H1 (cell line): ENCODE measurements at regions of chr17 and their contacts with region 1.

Region 1: GRCh38 chr17:19362277-19363113 is at the start of gene B9D1:
- DNase-seq: peak; percentile 73 to 97
- H3K4me3 ChIP-seq: peak within 1 kb of the TSS; percentile 34 to 93 (median 75)
- H3K27ac ChIP-seq: no peak within 1 kb of the TSS; the same call in 1 of the 2 replicates
- H3K4me1 ChIP-seq: peaks cover 0 to 9% (median 3%) of the 10 kb centered on the region in 4 experiments; a peak in 4 of 7 replicates
- H3K27me3 ChIP-seq: no peaks in the 10 kb centered on the region; a peak in 1 of 7 replicates
- CTCF ChIP-seq: peak; percentile 91 to 99 (median 95)
- EP300 ChIP-seq: peak in 1 of 2 experiments; percentile 27; a peak in 1 of 3 replicates
- POLR2A ChIP-seq: no peak
- RAD21 ChIP-seq: peak; percentile 99
- total RNA-seq, gene B9D1: 24.6 and 25.4 TPM in 2 replicates

Region 2: DNA sequence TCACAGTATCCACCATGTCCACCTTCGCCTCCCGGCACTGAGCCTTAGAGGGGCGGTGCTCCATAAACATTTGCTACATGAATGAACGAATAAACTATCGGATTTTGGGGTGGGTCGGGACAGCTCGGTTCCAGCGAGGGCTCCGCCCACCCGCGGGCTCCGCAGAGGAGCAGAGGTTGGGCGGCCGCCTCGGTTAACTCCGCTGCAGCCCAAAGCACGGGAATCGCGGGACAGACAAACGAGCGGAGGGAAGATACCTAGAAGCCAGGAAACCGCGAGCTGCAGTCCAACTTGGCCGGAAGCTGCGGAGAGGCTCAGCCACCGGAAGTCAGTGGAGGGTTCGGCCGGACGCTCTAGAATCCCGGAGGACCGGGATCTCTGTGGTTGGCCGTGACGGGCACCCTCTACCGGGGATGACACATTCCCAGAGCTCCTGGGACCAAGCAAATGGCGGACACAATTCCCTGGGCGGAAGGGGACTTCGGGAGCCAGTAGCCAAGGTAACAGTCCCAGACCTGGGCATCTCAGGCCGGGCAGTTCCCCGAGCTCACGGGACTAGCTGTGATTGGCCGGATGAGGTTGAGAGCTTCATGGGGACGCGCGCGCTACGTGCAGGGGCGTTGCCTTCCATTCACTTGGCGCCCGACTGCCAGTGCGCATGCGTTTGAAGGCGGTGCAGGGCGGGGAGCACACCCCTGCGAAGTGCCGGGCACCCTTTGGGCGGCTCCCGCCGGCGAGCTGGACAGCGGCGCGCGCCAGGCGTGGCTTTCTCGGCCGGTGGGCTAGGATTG is 15.3 kb after region 1 on chr17:
- CTCF ChIA-PET with region 1: interaction called, 20 read pairs
- POLR2A ChIA-PET with region 1: interaction called, 32 read pairs
- DNase-seq: peak; percentile 94 to 97
- H3K4me3 ChIP-seq: peak overlapping the region; percentile 59 to 90 (median 82)
- H3K27ac ChIP-seq: peak overlapping the region; percentile 79
- H3K4me1 ChIP-seq: peaks cover 3 to 11% (median 5%) of the 10 kb centered on the region in 4 experiments
- H3K27me3 ChIP-seq: no peaks in the 10 kb centered on the region
- CTCF ChIP-seq: no peak
- EP300 ChIP-seq: no peak
- POLR2A ChIP-seq: peak; percentile 38 to 87
- RAD21 ChIP-seq: no peak

Region 3: DNA sequence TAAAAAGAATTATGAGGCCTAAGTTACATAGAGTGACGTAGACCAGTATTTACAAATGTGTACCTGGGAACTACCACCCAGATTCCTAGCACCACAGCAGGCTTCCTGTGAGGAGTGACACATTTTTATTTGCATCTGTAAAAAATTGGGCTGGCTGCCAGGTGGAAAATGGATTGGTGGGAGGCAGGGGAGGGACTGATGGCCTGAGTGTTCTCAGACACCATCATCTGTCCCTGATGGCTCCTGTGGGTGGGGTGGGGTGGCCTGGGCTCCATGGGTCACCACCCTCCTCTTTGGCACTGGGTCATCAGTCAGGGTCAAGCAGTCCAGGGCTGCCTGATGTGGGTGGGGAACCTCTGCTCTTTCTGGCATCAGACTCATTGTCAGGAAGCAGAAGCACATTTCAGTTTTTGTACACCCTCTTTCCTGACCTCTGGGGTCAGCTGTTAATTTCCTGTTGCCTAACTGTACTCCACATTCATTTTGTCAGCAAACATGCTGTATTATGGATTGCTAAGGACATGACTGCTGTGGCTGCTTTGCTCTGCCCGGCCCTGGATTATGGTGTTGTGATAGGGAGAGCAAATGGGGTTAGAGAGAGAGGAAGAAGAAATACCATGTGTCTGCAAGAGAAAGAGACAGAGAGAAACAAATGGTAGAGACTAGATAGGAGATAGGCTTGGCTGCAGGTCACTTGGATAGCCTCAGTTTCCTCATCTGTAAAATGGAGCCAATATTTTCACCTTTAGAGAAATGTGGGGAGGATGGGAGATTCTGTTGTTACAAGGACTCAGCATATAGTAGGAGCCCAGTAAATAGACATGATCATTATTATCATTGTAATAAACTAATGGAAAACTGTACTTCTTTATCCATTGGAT is 36.0 kb after region 1 on chr17:
- CTCF ChIA-PET with region 1: interaction called, 14 read pairs
- POLR2A ChIA-PET with region 1: no interaction called
- DNase-seq: no peak
- H3K4me3 ChIP-seq: no peak overlapping the region
- H3K27ac ChIP-seq: no peak overlapping the region
- H3K4me1 ChIP-seq: peaks cover 2 to 9% (median 5%) of the 10 kb centered on the region in 4 experiments; a peak in 6 of 7 replicates
- H3K27me3 ChIP-seq: no peaks in the 10 kb centered on the region
- CTCF ChIP-seq: no peak
- EP300 ChIP-seq: no peak
- POLR2A ChIP-seq: no peak
- RAD21 ChIP-seq: no peak

Region 4: DNA sequence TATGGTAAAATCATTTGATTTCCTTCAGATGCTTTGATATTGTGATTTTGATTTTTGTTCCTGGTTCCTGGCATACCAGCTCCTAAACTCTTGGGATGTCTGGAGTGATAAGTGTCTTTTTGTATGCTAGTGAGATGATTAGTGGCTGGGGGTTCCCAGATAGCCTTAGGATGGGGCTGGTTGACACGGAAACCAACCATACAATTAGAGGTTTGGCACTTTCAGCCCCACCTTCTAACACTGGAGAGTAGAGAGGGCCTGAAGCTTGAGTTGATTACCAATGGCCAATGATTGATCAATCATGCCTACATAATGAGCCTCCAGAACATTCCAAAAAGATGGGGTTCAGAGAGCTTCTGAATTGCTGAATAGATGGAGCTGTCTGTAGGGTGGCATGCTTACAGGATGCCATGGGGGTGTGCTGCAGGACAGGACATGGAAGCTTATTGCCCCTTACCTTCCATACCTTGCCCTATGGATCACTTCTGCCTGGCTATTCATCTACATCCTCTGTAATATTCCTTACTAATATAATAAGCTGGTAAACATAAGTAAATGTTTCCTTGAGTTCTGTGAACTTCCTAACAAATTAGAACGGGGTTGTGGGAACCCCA is 71.3 kb after region 1 on chr17:
- CTCF ChIA-PET with region 1: interaction called, 16 read pairs
- POLR2A ChIA-PET with region 1: interaction called, 5 read pairs
- DNase-seq: no peak
- H3K4me3 ChIP-seq: peak overlapping the region in 1 of 4 experiments; percentile 31; a peak in 2 of 8 replicates
- H3K27ac ChIP-seq: no peak overlapping the region
- H3K4me1 ChIP-seq: peaks cover 5 to 16% (median 11%) of the 10 kb centered on the region in 4 experiments
- H3K27me3 ChIP-seq: no peaks in the 10 kb centered on the region
- CTCF ChIP-seq: peak; percentile 56 to 66 (median 58)
- EP300 ChIP-seq: no peak
- POLR2A ChIP-seq: no peak
- RAD21 ChIP-seq: peak; percentile 79 to 83

Region 5: GRCh38 chr17:19457830-19458271 is 95.4 kb after region 1 on chr17:
- CTCF ChIA-PET with region 1: interaction called, 15 read pairs
- POLR2A ChIA-PET with region 1: interaction called, 6 read pairs
- DNase-seq: peak in 1 of 2 experiments; percentile 49
- H3K4me3 ChIP-seq: peak overlapping the region in 1 of 4 experiments; percentile 23; a peak in 2 of 8 replicates
- H3K27ac ChIP-seq: peak overlapping the region; percentile 30; the same call in 1 of the 2 replicates
- H3K4me1 ChIP-seq: peaks cover 19 to 43% (median 40%) of the 10 kb centered on the region in 4 experiments
- H3K27me3 ChIP-seq: no peaks in the 10 kb centered on the region
- CTCF ChIP-seq: peak in 1 of 3 experiments; percentile 2; a peak in 1 of 4 replicates
- EP300 ChIP-seq: no peak
- POLR2A ChIP-seq: no peak
- RAD21 ChIP-seq: 0 out of 4 replicates have a peak, but pooled peaks of 1 of the 2 experiments have one; percentile 8

Region 6: GRCh38 chr17:19482576-19482975 is 120.1 kb after region 1 on chr17:
- CTCF ChIA-PET with region 1: no interaction called
- POLR2A ChIA-PET with region 1: no interaction called
- DNase-seq: no peak
- H3K4me3 ChIP-seq: peak overlapping the region in 1 of 4 experiments; percentile 16; a peak in 1 of 8 replicates
- H3K27ac ChIP-seq: no peak overlapping the region
- H3K4me1 ChIP-seq: peaks cover 0 to 10% (median 5%) of the 10 kb centered on the region in 4 experiments; a peak in 5 of 7 replicates
- H3K27me3 ChIP-seq: no peaks in the 10 kb centered on the region
- CTCF ChIP-seq: no peak
- EP300 ChIP-seq: peak in 1 of 2 experiments; percentile 8; a peak in 1 of 3 replicates
- POLR2A ChIP-seq: no peak
- RAD21 ChIP-seq: no peak

Region 7: GRCh38 chr17:19766422-19767270 is 404.2 kb after region 1 on chr17:
- CTCF ChIA-PET with region 1: interaction called, 20 read pairs
- POLR2A ChIA-PET with region 1: no interaction called
- DNase-seq: peak; percentile 49 to 94
- H3K4me3 ChIP-seq: no peak overlapping the region
- H3K27ac ChIP-seq: no peak overlapping the region
- H3K4me1 ChIP-seq: peaks cover 0 to 5% (median 0%) of the 10 kb centered on the region in 4 experiments; a peak in 2 of 7 replicates
- H3K27me3 ChIP-seq: no peaks in the 10 kb centered on the region
- CTCF ChIP-seq: peak; percentile 96 to 98 (median 97)
- EP300 ChIP-seq: no peak
- POLR2A ChIP-seq: no peak
- RAD21 ChIP-seq: peak; percentile 97 to 99